ENCODE measurements at regions of chr1 and their contacts with region 1.

Region 1: GRCh38 chr1:42924082-42924850 is 34.4 kb downstream of the SLC2A1 start:
- DNase-seq: no peak
- H3K4me3 ChIP-seq: peak overlapping the region; percentile 69
- CTCF ChIP-seq: peak; percentile 11

Region 2: GRCh38 chr1:42833981-42834380 is 90.3 kb before region 1 on chr1:
- in situ Hi-C with region 1: loop called (anchors 5 kb)
- DNase-seq: no peak
- H3K4me3 ChIP-seq: no peak overlapping the region
- CTCF ChIP-seq: no peak